ENCODE measurements at regions of chr17 and their contacts with region 1.

Region 1: GRCh38 chr17:65723385-65724151 is 162.1 kb upstream of the AXIN2 start:
- DNase-seq: no peak
- ATAC-seq: no peak
- H3K4me3 ChIP-seq: no peak overlapping the region
- H3K27ac ChIP-seq: no peak overlapping the region
- H3K4me1 ChIP-seq: peaks cover 0 to 3% of the 10 kb centered on the region in 2 donors
- H3K27me3 ChIP-seq: no peaks in the 10 kb centered on the region
- CTCF ChIP-seq: no peak
- POLR2A ChIP-seq: no peak

Region 2: GRCh38 chr17:65785109-65785508 is 61.5 kb after region 1 on chr17:
- in situ Hi-C with region 1: loop called in 2 of 4 experiments (anchors 10 kb)
- intact Hi-C with region 1: no loop called
- DNase-seq: no peak
- ATAC-seq: peak; percentile 54 to 85
- H3K4me3 ChIP-seq: no peak overlapping the region
- H3K27ac ChIP-seq: peak overlapping the region; percentile 34 to 59 (median 47)
- H3K4me1 ChIP-seq: peaks cover 10 to 22% of the 10 kb centered on the region in 2 donors
- H3K27me3 ChIP-seq: no peaks in the 10 kb centered on the region
- CTCF ChIP-seq: no peak
- POLR2A ChIP-seq: no peak

Region 3: DNA sequence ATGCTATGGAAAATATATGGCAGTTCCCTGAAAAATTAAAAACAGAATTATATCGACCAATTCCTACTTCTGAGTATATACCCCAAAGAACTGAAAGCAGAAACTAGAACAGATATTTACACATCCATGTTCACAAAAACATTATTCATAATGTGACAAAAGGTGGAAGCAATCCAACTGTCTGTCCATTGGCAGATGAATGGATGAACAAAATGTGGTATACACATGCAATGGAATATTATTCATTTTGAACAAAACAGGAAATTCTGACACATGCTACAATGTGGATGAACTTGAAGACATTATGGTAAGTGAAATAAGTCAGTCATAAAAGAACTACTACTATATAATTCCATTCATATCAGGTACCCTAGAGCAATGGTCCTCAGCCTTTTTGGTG is 101.3 kb after region 1 on chr17:
- in situ Hi-C with region 1: loop called in 1 of 4 experiments (anchors 25 kb)
- intact Hi-C with region 1: no loop called
- DNase-seq: no peak
- ATAC-seq: no peak
- H3K4me3 ChIP-seq: no peak overlapping the region
- H3K27ac ChIP-seq: no peak overlapping the region
- H3K4me1 ChIP-seq: no peaks in the 10 kb centered on the region
- H3K27me3 ChIP-seq: no peaks in the 10 kb centered on the region
- CTCF ChIP-seq: no peak
- POLR2A ChIP-seq: no peak

Measured in gastrocnemius medialis (tissue), 4 donors.